Sciatic nerve (tissue), 2 donors: ENCODE measurements at regions of chrX and their contacts with region 1.

Region 1: DNA sequence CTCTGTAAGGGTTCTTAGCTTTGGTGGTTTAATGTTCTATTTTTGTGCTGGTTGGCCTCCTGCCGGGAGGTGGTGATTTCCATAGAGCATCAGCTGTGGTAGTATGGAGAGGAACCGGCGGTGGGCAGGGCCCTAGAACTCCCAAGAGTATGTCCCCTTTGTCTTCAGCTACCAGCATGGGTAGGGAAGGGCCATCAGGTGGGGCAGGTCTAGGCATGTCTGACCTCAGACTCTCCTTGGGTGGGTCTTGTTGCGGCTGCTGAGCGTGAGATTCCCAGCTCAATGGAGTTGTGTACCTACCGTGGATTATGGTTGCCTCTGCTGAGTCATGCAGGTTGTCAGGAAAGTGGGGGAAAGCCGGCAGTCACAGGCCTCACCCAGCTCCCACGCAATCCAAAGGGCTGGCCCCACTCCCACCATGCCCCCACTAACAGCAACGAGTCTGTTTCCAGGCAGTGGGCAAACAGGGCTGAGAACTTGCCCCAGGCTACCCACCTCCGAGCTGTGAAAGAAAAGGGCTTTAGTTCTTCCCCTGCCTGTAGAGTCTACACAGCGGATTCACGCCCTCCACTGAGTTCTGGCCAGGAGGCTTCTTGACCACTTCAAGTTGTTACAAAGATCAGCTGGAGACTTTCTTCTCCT is 235.9 kb downstream of the RPA4 start:
- DNase-seq: no peak
- ATAC-seq: no peak

Region 2: GRCh38 chrX:96140796-96141195 is 978.8 kb before region 1 on chrX:
- intact Hi-C with region 1: loop called (anchors 5 kb)
- DNase-seq: no peak
- ATAC-seq: no peak

Region 3: DNA sequence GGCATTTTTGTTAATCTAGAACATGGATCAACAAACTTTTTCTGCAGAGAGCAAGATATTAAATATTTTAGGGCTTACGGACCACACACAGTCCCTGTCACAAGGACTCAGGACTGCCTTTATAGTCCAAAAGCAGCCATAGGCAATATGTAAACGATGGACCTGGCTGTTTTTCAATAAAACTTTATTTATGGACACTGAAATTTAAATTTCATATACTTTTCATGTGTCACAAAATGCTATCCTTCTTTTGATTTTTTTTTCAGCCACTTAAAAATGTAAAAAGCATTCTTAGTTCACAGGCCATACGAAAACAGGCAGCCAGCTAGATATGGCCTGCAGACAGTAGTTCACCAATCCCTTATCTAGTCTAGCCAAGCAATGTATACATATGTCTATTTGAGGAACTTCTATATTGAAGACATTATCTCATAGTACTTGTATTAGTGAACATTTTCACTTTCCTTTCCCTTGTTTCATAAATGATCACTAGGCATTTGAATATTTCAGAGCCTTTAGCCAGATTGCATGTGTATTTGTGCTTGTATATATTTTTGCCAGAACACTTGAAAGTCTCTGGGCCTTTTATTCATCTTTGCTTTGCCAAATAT is 115.0 kb after region 1 on chrX:
- intact Hi-C with region 1: no loop called
- DNase-seq: no peak
- ATAC-seq: no peak